ENCODE measurements at regions of chr19 and their contacts with region 1.

Region 1: DNA sequence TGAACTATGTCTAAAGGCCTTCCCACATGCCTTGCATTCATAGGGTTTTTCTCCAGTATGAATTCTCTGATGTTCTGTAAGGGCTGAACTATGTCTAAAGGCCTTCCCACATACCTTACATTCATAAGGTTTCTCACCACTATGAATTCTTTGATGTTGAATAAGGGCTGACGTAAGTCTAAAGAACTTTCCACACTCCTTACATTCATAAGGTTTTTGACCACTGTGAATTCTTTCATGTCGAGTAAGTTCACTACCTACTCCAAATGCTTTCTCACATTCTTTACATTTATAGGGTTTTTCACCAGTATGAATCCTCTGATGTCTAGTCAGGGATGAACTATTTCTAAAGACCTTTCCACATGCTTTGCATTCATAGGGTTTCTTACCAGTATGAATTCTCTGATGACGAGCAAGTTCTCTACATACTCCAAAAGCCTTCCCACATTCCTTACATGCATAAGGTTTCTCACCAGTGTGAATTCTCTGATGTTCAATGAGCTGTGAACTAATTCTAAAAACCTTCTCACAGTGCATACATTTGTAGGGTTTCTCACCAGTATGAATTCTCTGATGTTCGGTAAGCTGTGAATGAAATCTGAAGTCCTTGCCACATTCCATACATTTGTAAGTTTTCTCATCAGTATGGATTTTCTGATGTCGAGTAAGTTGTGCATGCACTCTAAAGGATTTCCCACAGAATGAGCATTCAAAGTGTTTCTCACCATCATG is 19.1 kb upstream of the ZNF260 start:
- DNase-seq: no peak
- ATAC-seq: no peak
- H3K4me3 ChIP-seq: no peak overlapping the region
- H3K27ac ChIP-seq: no peak overlapping the region
- H3K4me1 ChIP-seq: no peaks in the 10 kb centered on the region
- H3K27me3 ChIP-seq: no peaks in the 10 kb centered on the region
- CTCF ChIP-seq: no peak
- POLR2A ChIP-seq: no peak

Region 2: GRCh38 chr19:36460046-36460445 is 87.1 kb before region 1 on chr19:
- intact Hi-C with region 1: no loop called
- DNase-seq: no peak
- ATAC-seq: no peak
- H3K4me3 ChIP-seq: no peak overlapping the region
- H3K27ac ChIP-seq: no peak overlapping the region
- H3K4me1 ChIP-seq: no peaks in the 10 kb centered on the region
- H3K27me3 ChIP-seq: no peaks in the 10 kb centered on the region
- CTCF ChIP-seq: no peak
- POLR2A ChIP-seq: no peak

Region 3: GRCh38 chr19:36527341-36527740 is 19.8 kb before region 1 on chr19:
- intact Hi-C with region 1: no loop called
- DNase-seq: no peak
- ATAC-seq: no peak
- H3K4me3 ChIP-seq: peak overlapping the region; percentile 40 to 89 (median 74)
- H3K27ac ChIP-seq: peak overlapping the region in 11 of 12 donors; percentile 88 to 99 (median 94)
- H3K4me1 ChIP-seq: peaks cover 0 to 26% (median 15%) of the 10 kb centered on the region in 12 donors
- H3K27me3 ChIP-seq: no peaks in the 10 kb centered on the region
- CTCF ChIP-seq: no peak
- POLR2A ChIP-seq: no peak

Region 4: GRCh38 chr19:36627057-36627456 is 79.9 kb after region 1 on chr19:
- intact Hi-C with region 1: loop called in 1 of 10 experiments (anchors 10 kb)
- DNase-seq: no peak
- ATAC-seq: no peak
- H3K4me3 ChIP-seq: no peak overlapping the region
- H3K27ac ChIP-seq: no peak overlapping the region
- H3K4me1 ChIP-seq: no peaks in the 10 kb centered on the region
- H3K27me3 ChIP-seq: no peaks in the 10 kb centered on the region
- CTCF ChIP-seq: no peak
- POLR2A ChIP-seq: no peak

Region 5: GRCh38 chr19:36719687-36720556 is 172.8 kb after region 1 on chr19:
- intact Hi-C with region 1: loop called in 1 of 10 experiments (anchors 10 kb)
- DNase-seq: no peak
- ATAC-seq: no peak
- H3K4me3 ChIP-seq: no peak overlapping the region
- H3K27ac ChIP-seq: no peak overlapping the region
- H3K4me1 ChIP-seq: no peaks in the 10 kb centered on the region
- H3K27me3 ChIP-seq: no peaks in the 10 kb centered on the region
- CTCF ChIP-seq: no peak
- POLR2A ChIP-seq: no peak